ENCODE measurements at regions of chr2 and their contacts with region 1.

Region 1: DNA sequence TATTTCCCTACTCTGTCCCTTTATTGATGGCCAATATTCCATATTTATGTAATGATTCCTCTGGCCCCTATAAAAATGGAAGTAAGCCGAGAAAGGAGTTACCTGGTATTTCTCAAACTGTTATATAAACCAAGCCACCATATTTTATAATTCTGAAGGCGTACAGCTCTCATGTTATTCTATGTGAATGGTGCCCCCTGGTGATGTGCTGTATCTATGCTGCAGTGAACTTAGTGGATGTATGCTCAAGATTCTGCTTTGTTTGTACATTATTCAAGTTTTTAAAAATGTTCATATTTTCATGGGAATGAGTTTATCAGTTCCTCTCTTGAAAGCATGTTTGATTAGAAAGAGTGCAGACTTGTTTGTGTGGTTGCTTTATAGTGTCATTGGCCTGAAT is 194.5 kb upstream of the LRRTM1 start:
- DNase-seq: no peak
- H3K4me3 ChIP-seq: no peak overlapping the region
- H3K27ac ChIP-seq: no peak overlapping the region
- H3K4me1 ChIP-seq: peaks cover 0 to 22% (median 12%) of the 10 kb centered on the region in 4 donors
- H3K27me3 ChIP-seq: no peaks in the 10 kb centered on the region
- CTCF ChIP-seq: peak in 3 of 4 experiments; percentile 20 to 37 (median 29)
- EP300 ChIP-seq: no peak
- POLR2A ChIP-seq: no peak

Region 2: DNA sequence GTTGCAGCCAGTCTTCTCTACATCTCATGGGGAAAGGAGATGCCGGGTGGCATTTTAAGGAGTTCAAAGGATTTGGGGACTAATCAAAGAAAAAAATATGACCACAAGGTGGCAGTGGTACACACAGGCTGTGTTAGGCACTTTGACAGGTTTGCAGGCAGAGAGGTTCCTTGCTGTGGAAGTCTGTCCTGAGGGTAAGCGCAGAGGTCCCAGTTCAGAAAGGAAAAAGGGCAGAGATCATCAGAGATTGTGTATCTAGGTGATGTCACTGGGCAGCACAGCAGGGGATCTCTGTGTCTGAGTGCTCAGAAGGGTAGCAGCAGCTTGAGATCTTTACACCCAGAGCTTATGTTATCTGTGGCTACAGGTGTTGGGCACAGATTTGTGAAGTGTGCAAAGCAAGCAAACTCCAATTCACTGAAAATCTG is 425.9 kb before region 1 on chr2:
- intact Hi-C with region 1: loop called (anchors 5 kb)
- DNase-seq: no peak
- H3K4me3 ChIP-seq: no peak overlapping the region
- H3K27ac ChIP-seq: no peak overlapping the region
- H3K4me1 ChIP-seq: no peaks in the 10 kb centered on the region
- H3K27me3 ChIP-seq: no peaks in the 10 kb centered on the region
- CTCF ChIP-seq: peak in 3 of 4 experiments; percentile 27 to 59 (median 46)
- EP300 ChIP-seq: no peak
- POLR2A ChIP-seq: no peak

Region 3: GRCh38 chr2:80126596-80127189 is 372.4 kb before region 1 on chr2:
- intact Hi-C with region 1: no loop called
- DNase-seq: no peak
- H3K4me3 ChIP-seq: no peak overlapping the region
- H3K27ac ChIP-seq: no peak overlapping the region
- H3K4me1 ChIP-seq: no peaks in the 10 kb centered on the region
- H3K27me3 ChIP-seq: no peaks in the 10 kb centered on the region
- CTCF ChIP-seq: no peak
- EP300 ChIP-seq: no peak
- POLR2A ChIP-seq: no peak

Region 4: GRCh38 chr2:80530442-80531064 is 31.5 kb after region 1 on chr2:
- intact Hi-C with region 1: no loop called
- DNase-seq: no peak
- H3K4me3 ChIP-seq: no peak overlapping the region
- H3K27ac ChIP-seq: no peak overlapping the region
- H3K4me1 ChIP-seq: no peaks in the 10 kb centered on the region
- H3K27me3 ChIP-seq: no peaks in the 10 kb centered on the region
- CTCF ChIP-seq: no peak
- EP300 ChIP-seq: no peak
- POLR2A ChIP-seq: no peak